Activated CD4-positive, alpha-beta memory T cell treated with anti-CD3 and anti-CD28 coated beads, Interleukin-2, amount 10 ng/mL, durations not matched to agents 7 days and 5 days (primary cell): ENCODE measurements at regions of chr7 and their contacts with region 1.

Region 1: GRCh38 chr7:31114593-31115343 is 62.7 kb downstream of the ADCYAP1R1 start:
- DNase-seq: peak; percentile 16
- H3K4me3 Mint-ChIP-seq: no peak overlapping the region
- H3K27ac Mint-ChIP-seq: no peak overlapping the region
- H3K4me1 Mint-ChIP-seq: no peaks in the 10 kb centered on the region
- H3K27me3 Mint-ChIP-seq: peaks cover 5% of the 10 kb centered on the region

Region 2: GRCh38 chr7:31134246-31135188 is 19.7 kb after region 1 on chr7:
- CTCF ChIA-PET with region 1: interaction called, 61 read pairs
- POLR2A ChIA-PET with region 1: no interaction called
- DNase-seq: peak; percentile 45
- H3K4me3 Mint-ChIP-seq: no peak overlapping the region
- H3K27ac Mint-ChIP-seq: no peak overlapping the region
- H3K4me1 Mint-ChIP-seq: no peaks in the 10 kb centered on the region
- H3K27me3 Mint-ChIP-seq: no peaks in the 10 kb centered on the region